HEK293 (cell line): ENCODE measurements at regions of chr17 and their contacts with region 1.

Region 1: DNA sequence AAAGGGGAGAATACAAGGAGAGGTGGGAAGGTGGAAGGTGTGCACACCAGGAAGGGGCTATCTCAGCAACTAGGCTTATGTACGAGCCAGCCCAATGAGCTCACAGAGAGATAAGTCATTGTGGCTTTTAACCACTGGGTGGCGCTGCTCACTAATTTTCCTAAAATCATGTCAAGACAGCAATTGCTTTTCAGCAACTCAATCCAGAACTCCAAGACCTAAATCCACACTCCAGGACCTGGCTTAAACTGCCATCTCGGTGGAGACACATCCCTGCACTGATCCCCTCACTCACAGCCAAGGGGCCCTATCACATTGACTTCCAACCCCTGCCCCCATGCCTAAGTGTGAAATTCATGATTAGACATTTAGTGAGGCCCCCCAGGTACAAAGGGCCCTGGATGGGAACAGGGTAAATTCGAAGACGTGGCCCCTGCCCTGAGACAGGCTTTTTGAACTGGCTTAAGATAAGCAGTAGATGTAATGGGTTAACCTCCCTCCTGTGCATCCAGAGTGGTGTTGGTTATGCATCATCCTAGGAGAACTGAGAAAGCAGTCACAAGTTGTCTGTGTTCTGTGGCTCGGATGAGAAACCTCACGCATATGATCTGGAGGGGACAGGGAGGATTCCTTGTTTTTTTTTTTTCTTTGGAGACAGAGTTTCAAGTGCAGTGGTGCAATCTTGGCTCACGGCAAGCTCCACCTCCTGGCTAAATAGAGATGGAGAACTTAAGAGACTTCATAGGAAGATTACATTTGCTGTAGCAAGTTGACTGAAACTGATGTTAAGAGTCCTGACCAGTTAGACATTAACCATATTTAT is 11.5 kb downstream of the CCL16 start:
- H3K4me3 ChIP-seq: no peak overlapping the region
- H3K27ac ChIP-seq: no peak overlapping the region
- H3K4me1 ChIP-seq: no peaks in the 10 kb centered on the region
- CTCF ChIP-seq: peak; percentile 69

Region 2: GRCh38 chr17:35879773-35880654 is 89.8 kb before region 1 on chr17 and contains the start of gene CCL5:
- CTCF ChIA-PET with region 1: no interaction called
- POLR2A ChIA-PET with region 1: no interaction called
- H3K4me3 ChIP-seq: no peak within 1 kb of the TSS
- H3K27ac ChIP-seq: no peak within 1 kb of the TSS
- H3K4me1 ChIP-seq: no peaks in the 10 kb centered on the region
- CTCF ChIP-seq: no peak

Region 3: DNA sequence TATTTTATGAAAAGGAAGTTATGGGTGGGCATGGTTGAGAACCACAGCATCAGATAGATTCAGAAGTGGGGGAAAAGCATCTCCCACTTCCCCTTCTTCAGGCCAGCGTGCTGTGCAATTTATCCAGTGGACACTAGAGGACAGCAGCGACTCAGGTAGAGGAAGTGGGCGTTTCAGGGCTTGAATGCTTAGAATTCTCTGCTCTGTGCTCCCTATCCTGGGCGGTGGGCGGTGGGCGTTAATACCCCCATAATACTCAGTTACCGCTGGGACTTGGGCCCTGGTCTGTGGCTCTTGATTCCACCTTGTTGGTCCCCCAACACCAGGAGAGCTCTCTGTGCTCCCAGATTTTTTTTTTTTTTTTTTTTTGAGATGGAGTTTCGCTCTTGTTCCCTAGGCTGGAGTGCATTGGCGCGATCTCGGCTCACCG is 22.6 kb before region 1 on chr17:
- CTCF ChIA-PET with region 1: interaction called, 29 read pairs
- POLR2A ChIA-PET with region 1: no interaction called
- H3K4me3 ChIP-seq: no peak overlapping the region
- H3K27ac ChIP-seq: no peak overlapping the region
- H3K4me1 ChIP-seq: peaks cover 6% of the 10 kb centered on the region; the same call in 1 of the 2 replicates
- CTCF ChIP-seq: peak; percentile 67; the same call in 1 of the 2 replicates

Region 4: GRCh38 chr17:35981908-35982330 is 12.2 kb after region 1 on chr17:
- CTCF ChIA-PET with region 1: interaction called, 11 read pairs
- POLR2A ChIA-PET with region 1: no interaction called
- H3K4me3 ChIP-seq: no peak overlapping the region
- H3K27ac ChIP-seq: no peak overlapping the region
- H3K4me1 ChIP-seq: no peaks in the 10 kb centered on the region
- CTCF ChIP-seq: no peak

Region 5: DNA sequence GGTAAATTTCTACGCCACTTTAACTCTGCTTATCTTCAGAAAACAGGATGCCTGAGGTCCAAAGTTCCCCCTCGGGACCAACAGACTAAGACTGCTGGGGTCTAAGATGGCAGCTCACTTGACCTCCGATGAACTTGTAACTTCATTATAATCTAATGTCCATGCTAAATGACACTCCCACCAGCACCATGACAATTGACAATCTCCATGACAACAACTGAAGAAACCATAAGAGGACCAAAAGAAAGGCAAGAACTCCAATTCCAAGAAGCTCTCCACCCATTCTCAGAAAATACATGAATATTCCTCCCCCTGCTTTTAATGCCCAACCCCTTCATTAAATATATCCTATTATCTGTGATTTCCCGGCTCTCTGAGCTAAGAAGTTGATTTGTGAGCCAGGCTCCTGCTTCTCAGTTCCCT is 141.3 kb after region 1 on chr17:
- CTCF ChIA-PET with region 1: interaction called, 12 read pairs
- POLR2A ChIA-PET with region 1: no interaction called
- H3K4me3 ChIP-seq: no peak overlapping the region
- H3K27ac ChIP-seq: no peak overlapping the region
- H3K4me1 ChIP-seq: no peaks in the 10 kb centered on the region
- CTCF ChIP-seq: no peak

Region 6: DNA sequence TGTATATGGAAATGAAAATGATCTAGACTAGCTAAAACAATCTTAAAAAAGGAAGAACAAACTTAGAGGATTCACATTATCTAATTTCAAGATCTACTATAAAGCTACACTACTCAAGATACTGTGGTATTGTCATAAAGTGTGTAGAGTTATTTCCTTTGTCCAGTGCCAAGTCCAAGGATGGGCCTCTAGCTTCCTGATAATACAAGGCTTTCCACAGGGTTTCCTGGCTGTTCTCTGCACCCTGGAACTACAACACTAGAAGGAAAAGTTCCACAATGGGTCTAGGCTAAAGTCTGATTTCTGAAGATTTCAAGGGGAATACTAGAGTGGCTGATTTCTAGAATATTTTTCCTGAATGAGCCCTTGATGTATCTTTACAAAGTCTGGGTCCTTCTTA is 172.5 kb after region 1 on chr17:
- CTCF ChIA-PET with region 1: interaction called, 330 read pairs
- POLR2A ChIA-PET with region 1: no interaction called
- H3K4me3 ChIP-seq: no peak overlapping the region
- H3K27ac ChIP-seq: no peak overlapping the region
- H3K4me1 ChIP-seq: no peaks in the 10 kb centered on the region
- CTCF ChIP-seq: no peak